ENCODE measurements at regions of chr14 and their contacts with region 1.

Region 1: DNA sequence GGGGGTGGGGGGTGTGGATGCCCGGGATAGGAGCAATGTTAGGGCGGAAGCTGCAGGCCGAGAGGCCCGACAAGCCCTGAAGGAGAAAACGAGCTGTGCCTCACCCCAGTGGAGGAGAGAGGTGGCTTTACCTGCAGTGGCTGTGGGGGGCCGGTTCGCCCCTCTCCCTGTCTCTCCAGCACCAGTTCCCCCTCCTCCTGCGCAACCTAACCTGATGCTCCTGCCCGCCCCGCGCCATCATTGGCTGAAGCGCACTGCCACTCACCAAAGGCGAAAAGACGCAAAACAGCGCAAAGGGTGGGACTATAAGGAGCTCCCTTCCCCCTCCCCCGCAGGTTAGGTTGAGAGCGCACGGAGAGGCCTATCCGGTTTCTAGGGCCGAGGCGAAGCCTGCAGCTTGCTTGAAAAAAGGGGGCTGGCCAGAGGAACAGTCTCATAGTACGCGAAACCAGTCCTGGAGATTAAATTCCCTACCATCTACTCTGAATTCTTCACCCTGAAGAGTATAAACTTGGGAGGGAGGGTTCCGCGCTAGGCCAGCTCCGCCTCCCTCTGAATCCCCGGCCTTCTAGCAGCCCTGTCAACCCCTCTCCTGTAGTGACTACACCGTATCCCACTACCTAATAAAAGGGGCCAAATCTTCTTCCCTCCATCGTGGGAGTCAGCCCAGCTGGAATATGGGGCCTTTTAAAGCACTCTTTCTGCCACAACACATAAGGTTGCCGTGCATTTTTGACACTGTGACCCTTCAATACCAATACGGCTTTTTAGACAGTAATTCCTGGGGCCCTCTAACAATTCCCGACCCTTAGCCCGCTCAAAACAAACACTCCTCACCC is 18.6 kb downstream of the CHD8 start:
- DNase-seq: peak; percentile 100
- H3K4me3 ChIP-seq: peak overlapping the region; percentile 88
- H3K27ac ChIP-seq: peak overlapping the region; percentile 86
- H3K4me1 ChIP-seq: peaks cover 19% of the 10 kb centered on the region
- H3K27me3 ChIP-seq: no peaks in the 10 kb centered on the region
- CTCF ChIP-seq: no peak

Region 2: GRCh38 chr14:21557084-21557901 is 120.0 kb after region 1 on chr14:
- CTCF ChIA-PET with region 1: no interaction called
- POLR2A ChIA-PET with region 1: interaction called, 22 read pairs
- intact Hi-C with region 1: no loop called
- DNase-seq: peak; percentile 94
- H3K4me3 ChIP-seq: peak overlapping the region; percentile 39
- H3K27ac ChIP-seq: peak overlapping the region; percentile 17
- H3K4me1 ChIP-seq: peaks cover 6% of the 10 kb centered on the region
- H3K27me3 ChIP-seq: no peaks in the 10 kb centered on the region
- CTCF ChIP-seq: peak; percentile 79

Measured in A673 (cell line).